A673 (cell line): ENCODE measurements at regions of chr9 and their contacts with region 1.

Region 1: GRCh38 chr9:113591001-113591898 is 127.7 kb downstream of the RGS3 start:
- DNase-seq: peak; percentile 84
- H3K4me3 ChIP-seq: no peak overlapping the region
- H3K27ac ChIP-seq: no peak overlapping the region
- H3K4me1 ChIP-seq: peaks cover 16% of the 10 kb centered on the region
- H3K27me3 ChIP-seq: no peaks in the 10 kb centered on the region
- CTCF ChIP-seq: peak; percentile 93

Region 2: GRCh38 chr9:113210815-113211214 is 380.4 kb before region 1 on chr9:
- CTCF ChIA-PET with region 1: no interaction called
- POLR2A ChIA-PET with region 1: interaction called, 12 read pairs
- intact Hi-C with region 1: no loop called
- DNase-seq: no peak
- H3K4me3 ChIP-seq: no peak overlapping the region
- H3K27ac ChIP-seq: no peak overlapping the region
- H3K4me1 ChIP-seq: peaks cover 16% of the 10 kb centered on the region
- H3K27me3 ChIP-seq: no peaks in the 10 kb centered on the region
- CTCF ChIP-seq: no peak

Region 3: DNA sequence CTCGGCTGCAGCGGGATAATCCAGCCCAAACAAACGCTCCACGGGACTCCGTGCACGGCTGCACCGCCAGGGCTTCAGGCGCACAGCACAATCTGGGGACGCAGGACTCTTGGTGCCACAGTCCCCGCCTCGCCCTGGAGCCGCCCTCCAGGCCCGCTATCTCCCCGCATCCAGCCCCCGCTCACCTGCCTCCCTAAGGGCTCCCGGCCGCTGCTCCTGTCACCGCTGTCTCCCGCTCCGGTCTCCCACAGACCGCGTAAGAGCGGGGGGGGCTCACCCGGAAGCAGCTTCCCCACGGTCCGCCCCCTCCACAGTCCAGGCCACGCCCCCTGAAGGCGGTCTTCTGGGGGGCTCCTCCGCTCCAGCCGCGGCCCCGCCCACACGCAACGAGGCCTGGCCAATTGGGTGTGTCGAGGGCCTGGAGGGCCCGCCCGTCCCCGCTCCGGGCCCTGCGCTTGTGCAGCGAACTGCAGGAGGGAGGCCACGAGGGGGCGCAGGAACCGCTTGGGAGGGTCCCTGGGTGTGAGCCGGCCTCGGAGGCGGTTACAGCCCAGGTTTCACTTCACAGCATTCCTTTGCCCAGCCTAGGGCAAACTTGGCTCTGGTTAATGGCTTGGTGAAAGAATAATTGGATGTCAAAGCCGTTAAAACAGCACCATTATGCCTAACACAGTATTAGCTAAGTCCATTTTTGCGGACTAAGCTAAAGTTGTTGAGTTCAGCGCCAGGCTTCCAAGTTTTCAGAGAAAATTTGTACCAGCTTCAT is 190.0 kb before region 1 on chr9 and contains the start of gene ALAD:
- CTCF ChIA-PET with region 1: interaction called, 6 read pairs
- POLR2A ChIA-PET with region 1: no interaction called
- intact Hi-C with region 1: loop called (anchors 5 kb)
- DNase-seq: peak; percentile 99
- H3K4me3 ChIP-seq: peak within 1 kb of the TSS; percentile 95
- H3K27ac ChIP-seq: peak within 1 kb of the TSS; percentile 57
- H3K4me1 ChIP-seq: peaks cover 4% of the 10 kb centered on the region
- H3K27me3 ChIP-seq: no peaks in the 10 kb centered on the region
- CTCF ChIP-seq: peak; percentile 99
- total RNA-seq, gene ALAD: 18.9 and 20.9 TPM in 2 replicates

Region 4: GRCh38 chr9:113602126-113603044 is 11.1 kb after region 1 on chr9:
- CTCF ChIA-PET with region 1: interaction called, 11 read pairs
- POLR2A ChIA-PET with region 1: no interaction called
- intact Hi-C with region 1: no loop called
- DNase-seq: peak; percentile 88
- H3K4me3 ChIP-seq: no peak overlapping the region
- H3K27ac ChIP-seq: peak overlapping the region; percentile 48
- H3K4me1 ChIP-seq: peaks cover 33% of the 10 kb centered on the region
- H3K27me3 ChIP-seq: no peaks in the 10 kb centered on the region
- CTCF ChIP-seq: no peak

Region 5: GRCh38 chr9:113712023-113712422 is 120.8 kb after region 1 on chr9:
- CTCF ChIA-PET with region 1: interaction called, 14 read pairs
- POLR2A ChIA-PET with region 1: no interaction called
- intact Hi-C with region 1: no loop called
- DNase-seq: peak; percentile 45
- H3K4me3 ChIP-seq: no peak overlapping the region
- H3K27ac ChIP-seq: no peak overlapping the region
- H3K4me1 ChIP-seq: no peaks in the 10 kb centered on the region
- H3K27me3 ChIP-seq: no peaks in the 10 kb centered on the region
- CTCF ChIP-seq: no peak

Region 6: GRCh38 chr9:113737517-113738271 is 146.4 kb after region 1 on chr9:
- CTCF ChIA-PET with region 1: no interaction called
- POLR2A ChIA-PET with region 1: no interaction called
- intact Hi-C with region 1: no loop called
- DNase-seq: peak; percentile 72
- H3K4me3 ChIP-seq: no peak overlapping the region
- H3K27ac ChIP-seq: no peak overlapping the region
- H3K4me1 ChIP-seq: no peaks in the 10 kb centered on the region
- H3K27me3 ChIP-seq: no peaks in the 10 kb centered on the region
- CTCF ChIP-seq: peak; percentile 87

Region 7: DNA sequence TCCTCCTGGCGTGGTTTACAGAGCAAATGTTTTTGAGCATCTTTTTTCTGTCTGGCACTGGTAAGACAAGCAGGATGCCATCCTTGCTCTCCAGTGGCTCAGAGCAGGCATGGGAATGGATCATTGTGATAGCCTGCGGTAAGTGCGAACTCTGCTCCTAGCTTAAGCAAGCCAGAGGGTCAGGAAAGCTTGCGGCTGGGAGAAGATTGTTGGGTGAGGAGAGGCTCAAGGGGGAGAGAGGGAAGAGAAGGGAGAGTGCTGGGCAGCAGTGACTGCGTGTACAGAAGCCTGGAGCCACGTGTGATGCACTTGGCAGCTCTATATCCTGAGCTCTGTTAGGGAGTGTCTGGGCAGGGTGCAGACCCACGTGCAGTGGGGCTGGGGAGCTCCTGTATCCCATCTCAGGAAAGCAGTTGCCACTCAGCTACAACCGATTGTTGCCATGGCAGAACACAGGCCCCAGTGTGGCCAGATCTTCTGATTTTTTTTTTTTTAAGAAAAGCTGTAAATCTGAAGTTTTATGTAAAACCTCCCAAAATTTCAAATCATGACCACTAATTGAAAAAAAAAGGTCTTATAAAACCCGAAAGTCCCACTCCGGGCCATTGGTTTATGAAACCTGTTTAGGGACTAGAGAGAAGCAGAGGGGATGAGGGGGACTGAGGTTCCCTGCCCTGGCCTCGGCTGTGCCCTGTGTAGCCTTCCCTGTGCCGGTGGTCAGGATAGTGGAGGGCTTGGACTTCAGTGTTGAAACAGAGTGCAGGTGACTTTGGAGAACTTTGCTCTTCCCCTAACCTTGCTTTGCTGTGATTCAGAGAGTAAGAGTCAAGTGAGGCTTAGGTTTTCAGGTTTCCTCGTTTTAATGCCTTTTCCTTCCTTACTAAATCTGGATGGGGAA is 352.1 kb after region 1 on chr9:
- CTCF ChIA-PET with region 1: no interaction called
- POLR2A ChIA-PET with region 1: no interaction called
- intact Hi-C with region 1: no loop called
- DNase-seq: no peak
- H3K4me3 ChIP-seq: no peak overlapping the region
- H3K27ac ChIP-seq: no peak overlapping the region
- H3K4me1 ChIP-seq: no peaks in the 10 kb centered on the region
- H3K27me3 ChIP-seq: no peaks in the 10 kb centered on the region
- CTCF ChIP-seq: no peak

Region 8: DNA sequence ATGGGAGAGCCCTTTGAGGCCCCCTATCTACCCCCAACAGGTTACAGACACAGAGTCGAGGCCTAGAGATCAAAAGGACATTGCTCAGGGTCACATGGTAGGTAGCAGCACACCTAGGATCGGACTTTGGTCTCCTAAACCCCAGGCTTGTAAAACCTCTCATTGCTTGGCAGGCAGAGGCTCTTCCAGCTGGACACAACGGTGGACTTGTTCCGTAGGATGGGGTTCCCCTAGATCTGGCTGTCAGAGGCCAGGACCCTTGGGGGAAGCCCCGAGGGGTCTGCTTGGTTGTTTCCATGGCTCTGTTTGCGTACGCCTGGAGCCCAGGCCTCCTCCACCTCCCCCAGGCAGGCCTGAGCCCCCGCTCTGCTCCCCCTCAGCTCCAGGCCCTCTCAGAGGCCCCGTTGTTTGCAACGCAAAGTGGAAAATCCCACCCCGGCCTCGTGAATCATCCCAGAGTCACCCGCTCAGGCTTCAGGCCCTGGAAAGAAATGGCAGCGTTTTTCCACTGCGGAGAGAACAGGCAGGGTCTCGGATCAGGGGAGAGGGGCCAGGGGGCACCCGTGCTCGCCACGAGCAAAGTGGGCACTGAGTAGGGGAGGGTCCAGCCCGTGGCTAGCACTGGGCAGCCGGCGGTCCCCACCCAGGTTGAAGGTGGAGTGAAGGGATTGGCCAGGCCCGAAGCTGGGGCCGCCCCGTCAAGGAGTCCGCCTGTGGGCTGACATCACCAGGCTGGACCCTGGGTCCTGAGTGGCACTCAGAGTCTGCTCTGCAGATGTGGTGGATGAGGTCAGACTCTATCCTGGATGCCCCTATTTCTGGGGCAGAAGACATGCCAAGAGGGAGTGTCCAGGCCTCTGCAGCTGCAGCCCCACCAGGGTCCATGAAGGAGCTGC is 583.9 kb after region 1 on chr9:
- CTCF ChIA-PET with region 1: no interaction called
- POLR2A ChIA-PET with region 1: no interaction called
- intact Hi-C with region 1: no loop called
- DNase-seq: no peak
- H3K4me3 ChIP-seq: no peak overlapping the region
- H3K27ac ChIP-seq: no peak overlapping the region
- H3K4me1 ChIP-seq: peaks cover 24% of the 10 kb centered on the region
- H3K27me3 ChIP-seq: no peaks in the 10 kb centered on the region
- CTCF ChIP-seq: no peak